Activated CD8-positive, alpha-beta memory T cell treated with anti-CD3 and anti-CD28 coated beads, Interleukin-2, amount 10 ng/mL, durations not matched to agents 7 days and 5 days (primary cell): ENCODE measurements at regions of chr2 and their contacts with region 1.

Region 1: GRCh38 chr2:73176881-73177644 is 25.3 kb upstream of the NOTO start:
- DNase-seq: peak; percentile 90
- ATAC-seq: peak; percentile 92
- H3K4me3 Mint-ChIP-seq: peak overlapping the region; percentile 76
- H3K27ac Mint-ChIP-seq: no peak overlapping the region
- H3K4me1 Mint-ChIP-seq: peaks cover 17% of the 10 kb centered on the region
- H3K27me3 Mint-ChIP-seq: peaks cover 67% of the 10 kb centered on the region

Region 2: GRCh38 chr2:72973566-72974435 is 203.3 kb before region 1 on chr2:
- CTCF ChIA-PET with region 1: interaction called, 25 read pairs
- DNase-seq: peak; percentile 64
- ATAC-seq: peak; percentile 92
- H3K4me3 Mint-ChIP-seq: no peak overlapping the region
- H3K27ac Mint-ChIP-seq: no peak overlapping the region
- H3K4me1 Mint-ChIP-seq: no peaks in the 10 kb centered on the region
- H3K27me3 Mint-ChIP-seq: peaks cover 7% of the 10 kb centered on the region

Region 3: DNA sequence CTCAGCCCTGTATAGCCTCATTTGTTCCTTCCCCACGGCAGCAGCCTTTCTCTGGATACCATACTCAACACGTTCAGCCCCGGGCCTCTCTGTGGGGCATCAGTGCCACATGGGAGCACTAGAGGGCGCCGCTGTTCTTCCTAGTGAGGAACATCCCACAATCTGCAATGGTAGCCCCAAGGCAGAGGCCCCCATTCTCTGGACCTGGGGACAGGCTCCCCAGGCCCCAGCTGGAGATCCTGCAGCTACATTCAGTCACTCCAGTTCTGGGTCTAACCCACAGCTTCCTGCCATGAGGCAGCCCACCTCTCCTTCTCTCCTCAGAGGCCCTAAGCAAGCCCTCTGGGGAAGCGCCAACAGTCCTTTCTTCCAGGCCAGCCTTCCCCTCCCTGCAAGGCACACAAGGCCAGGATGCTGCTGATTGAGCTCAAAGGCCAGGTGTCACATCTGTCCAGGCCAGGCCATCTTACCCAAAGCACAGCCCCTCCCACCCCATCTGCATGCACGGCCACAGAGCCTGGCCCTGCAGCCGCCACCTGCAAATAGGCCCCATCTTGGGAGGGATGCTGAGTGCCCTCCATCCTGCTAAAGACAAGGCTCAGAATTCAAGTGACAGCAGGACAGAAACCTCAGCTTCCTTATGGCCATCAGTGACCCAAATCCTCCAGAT is 91.2 kb before region 1 on chr2:
- CTCF ChIA-PET with region 1: interaction called, 67 read pairs
- DNase-seq: peak; percentile 89
- ATAC-seq: peak; percentile 96
- H3K4me3 Mint-ChIP-seq: no peak overlapping the region
- H3K27ac Mint-ChIP-seq: no peak overlapping the region
- H3K4me1 Mint-ChIP-seq: no peaks in the 10 kb centered on the region
- H3K27me3 Mint-ChIP-seq: no peaks in the 10 kb centered on the region

Region 4: GRCh38 chr2:73163483-73164367 is 13.3 kb before region 1 on chr2:
- CTCF ChIA-PET with region 1: interaction called, 18 read pairs
- DNase-seq: peak; percentile 71
- ATAC-seq: peak; percentile 89
- H3K4me3 Mint-ChIP-seq: no peak overlapping the region
- H3K27ac Mint-ChIP-seq: no peak overlapping the region
- H3K4me1 Mint-ChIP-seq: no peaks in the 10 kb centered on the region
- H3K27me3 Mint-ChIP-seq: peaks cover 15% of the 10 kb centered on the region

Region 5: DNA sequence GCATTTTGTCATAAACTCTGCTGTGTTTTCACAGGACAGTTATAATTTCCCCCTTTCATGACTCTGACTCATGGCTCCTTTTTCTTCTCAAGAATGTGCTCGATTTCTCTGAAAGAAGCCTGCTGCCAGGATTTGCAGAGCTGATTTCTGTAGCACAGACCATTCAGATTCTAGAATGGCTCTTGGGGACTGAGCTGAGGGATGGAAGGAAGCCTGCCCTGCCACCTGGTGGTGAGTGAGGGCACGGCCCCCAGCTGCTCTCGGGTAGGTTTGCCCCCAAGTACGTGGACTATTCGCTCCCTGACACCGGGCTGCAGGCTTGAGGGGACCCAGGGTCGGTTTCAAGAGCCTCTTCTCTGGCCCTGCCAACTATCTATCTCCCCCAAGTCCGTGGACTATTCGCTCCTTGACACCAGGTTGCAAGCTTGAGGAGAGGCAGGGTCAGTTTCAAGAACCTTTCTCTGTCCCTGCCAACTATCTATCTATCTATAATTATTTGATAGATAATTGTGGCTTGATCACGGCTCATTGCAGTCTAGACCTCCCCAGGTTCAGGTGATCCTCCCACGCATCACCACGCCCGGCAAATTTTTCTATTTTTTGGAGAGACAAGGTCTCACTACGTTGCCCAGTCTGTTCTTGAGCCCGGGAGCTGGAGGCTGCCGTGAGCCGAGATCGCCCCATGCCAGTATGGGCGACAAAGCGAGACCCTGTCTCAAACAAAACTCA is 35.5 kb after region 1 on chr2:
- CTCF ChIA-PET with region 1: interaction called, 80 read pairs
- DNase-seq: peak; percentile 83
- ATAC-seq: peak; percentile 76
- H3K4me3 Mint-ChIP-seq: peak overlapping the region; percentile 89
- H3K27ac Mint-ChIP-seq: no peak overlapping the region
- H3K4me1 Mint-ChIP-seq: peaks cover 30% of the 10 kb centered on the region
- H3K27me3 Mint-ChIP-seq: peaks cover 2% of the 10 kb centered on the region

Region 6: GRCh38 chr2:73468376-73468775 is 291.3 kb after region 1 on chr2:
- CTCF ChIA-PET with region 1: no interaction called
- DNase-seq: no peak
- ATAC-seq: no peak
- H3K4me3 Mint-ChIP-seq: no peak overlapping the region
- H3K27ac Mint-ChIP-seq: no peak overlapping the region
- H3K4me1 Mint-ChIP-seq: no peaks in the 10 kb centered on the region
- H3K27me3 Mint-ChIP-seq: no peaks in the 10 kb centered on the region